Left ventricle myocardium superior (tissue), 1 donor: ENCODE measurements at regions of chr13 and their contacts with region 1.

Region 1: GRCh38 chr13:26186118-26186870 is 35.8 kb downstream of the RNF6 start:
- DNase-seq: peak; percentile 93
- ATAC-seq: peak; percentile 96

Region 2: DNA sequence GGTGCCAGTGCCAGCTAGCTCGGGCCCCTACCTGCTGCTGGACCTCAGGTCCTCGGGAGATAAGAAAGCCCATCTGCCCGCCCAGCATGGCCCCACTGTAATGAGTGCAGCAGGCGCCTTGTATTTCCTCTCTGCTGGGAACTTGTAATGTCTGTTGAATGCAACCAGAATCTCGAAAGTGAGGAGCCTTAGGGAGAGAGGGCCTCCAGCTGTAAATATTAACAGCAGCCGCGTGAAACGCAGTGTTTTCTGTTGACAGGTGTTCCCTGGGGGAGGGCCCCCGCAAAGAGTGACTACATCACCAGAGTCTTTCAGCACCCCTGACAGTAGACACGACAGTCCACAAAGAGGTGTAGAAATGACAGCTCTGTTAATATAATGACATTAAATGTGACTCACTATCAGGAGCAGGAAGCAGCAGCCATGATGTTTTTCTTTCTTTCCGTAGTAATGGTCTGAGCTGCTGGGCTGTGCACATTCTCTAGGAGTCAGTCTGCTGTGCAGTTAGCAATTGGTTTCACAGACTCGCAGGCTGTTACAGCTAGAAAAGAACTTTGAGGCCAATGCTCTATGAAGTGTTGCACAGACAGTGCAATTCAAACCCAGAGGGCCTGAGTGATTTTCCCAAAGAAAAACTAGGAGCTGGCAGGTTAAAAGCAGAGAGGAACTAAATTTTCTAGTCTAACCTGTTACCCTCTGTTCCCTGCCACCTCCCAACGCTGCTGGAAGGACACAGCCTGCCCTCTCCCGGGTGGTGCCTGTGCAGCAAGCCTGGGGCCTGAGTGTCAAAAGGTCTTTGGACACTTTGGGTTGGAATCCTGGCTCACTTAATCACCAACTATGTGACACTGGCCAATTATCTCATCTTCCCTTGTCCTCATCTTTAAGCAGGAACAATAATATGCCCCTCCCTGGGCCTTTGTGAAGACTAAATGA is 312.6 kb after region 1 on chr13:
- intact Hi-C with region 1: loop called (anchors 5 kb)
- DNase-seq: no peak
- ATAC-seq: peak; percentile 49

Region 3: DNA sequence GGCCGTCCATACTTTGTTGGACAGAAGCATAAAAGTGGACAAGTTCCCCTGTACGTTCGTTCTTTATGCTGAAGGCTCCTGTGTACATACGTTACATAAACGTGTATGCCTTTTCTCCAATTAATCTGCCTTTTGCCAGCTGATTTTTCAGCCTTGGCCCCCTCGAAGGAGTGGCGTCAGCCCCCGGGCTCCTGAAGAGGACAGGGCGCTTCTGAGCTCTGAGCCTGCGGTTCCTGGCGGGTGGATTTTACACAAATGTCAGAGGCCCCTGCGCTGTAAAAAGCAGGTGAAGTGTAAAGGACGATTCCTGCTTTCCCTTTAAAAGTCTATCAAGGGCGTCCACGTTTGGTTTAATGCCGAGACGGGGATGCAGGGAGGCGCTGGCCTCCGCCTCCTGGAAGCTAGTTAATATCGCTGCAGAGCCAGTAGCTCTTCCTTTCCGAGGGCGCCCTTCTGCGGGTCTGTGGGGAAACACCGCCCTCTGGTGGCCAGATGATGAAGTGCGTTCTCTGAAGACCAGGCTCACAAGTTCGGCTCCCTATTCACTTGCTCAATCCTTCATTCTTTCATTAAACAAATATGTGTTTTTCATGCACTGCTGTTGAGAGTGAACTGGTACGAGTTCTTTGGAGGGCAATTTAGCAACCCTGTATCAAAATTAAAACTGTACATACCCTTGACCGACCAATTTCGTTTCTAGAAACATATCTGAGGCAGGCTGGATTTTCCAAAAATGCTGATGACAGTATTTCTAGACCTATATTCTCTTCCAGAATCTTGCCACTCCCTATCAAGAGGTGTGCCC is 512.3 kb after region 1 on chr13:
- intact Hi-C with region 1: loop called (anchors 10 kb)
- DNase-seq: peak; percentile 84
- ATAC-seq: peak; percentile 89